Activated CD8-positive, alpha-beta T cell treated with anti-CD3 and anti-CD28 coated beads, Interleukin-2, amount 10 ng/mL, durations not matched to agents 7 days and 5 days (primary cell): ENCODE measurements at regions of chr7 and their contacts with region 1.

Region 1: DNA sequence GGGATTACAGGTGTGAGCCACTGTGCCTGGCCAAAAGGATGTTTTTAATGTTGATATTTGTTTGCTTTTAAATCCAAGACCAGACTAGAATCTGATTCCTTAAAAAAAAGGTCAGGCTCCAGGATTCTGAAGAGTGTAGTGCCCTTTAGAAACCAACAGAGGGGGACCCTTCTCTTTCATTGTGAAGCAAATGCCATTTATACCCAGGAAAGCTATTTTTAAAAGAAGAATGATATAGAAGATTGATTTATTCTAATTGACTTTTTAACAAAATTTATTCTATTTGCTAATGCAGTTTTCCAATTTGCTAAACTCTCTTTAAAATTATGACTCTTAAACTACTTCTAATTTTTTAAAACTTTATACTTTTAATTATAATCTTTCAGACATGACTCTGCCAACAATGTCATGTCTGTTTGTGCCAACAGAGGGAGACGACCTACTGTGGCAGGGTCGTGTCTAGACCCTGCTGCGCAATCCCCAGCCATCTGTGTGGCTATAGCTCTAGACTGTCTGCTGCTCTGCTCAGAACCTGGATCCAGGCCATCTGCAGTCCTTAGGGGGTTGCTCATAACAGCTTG is 201.0 kb upstream of the IMMP2L start:
- DNase-seq: no peak
- ATAC-seq: no peak
- H3K4me3 Mint-ChIP-seq: no peak overlapping the region
- H3K27ac Mint-ChIP-seq: no peak overlapping the region
- H3K4me1 Mint-ChIP-seq: no peaks in the 10 kb centered on the region
- H3K27me3 Mint-ChIP-seq: no peaks in the 10 kb centered on the region

Region 2: DNA sequence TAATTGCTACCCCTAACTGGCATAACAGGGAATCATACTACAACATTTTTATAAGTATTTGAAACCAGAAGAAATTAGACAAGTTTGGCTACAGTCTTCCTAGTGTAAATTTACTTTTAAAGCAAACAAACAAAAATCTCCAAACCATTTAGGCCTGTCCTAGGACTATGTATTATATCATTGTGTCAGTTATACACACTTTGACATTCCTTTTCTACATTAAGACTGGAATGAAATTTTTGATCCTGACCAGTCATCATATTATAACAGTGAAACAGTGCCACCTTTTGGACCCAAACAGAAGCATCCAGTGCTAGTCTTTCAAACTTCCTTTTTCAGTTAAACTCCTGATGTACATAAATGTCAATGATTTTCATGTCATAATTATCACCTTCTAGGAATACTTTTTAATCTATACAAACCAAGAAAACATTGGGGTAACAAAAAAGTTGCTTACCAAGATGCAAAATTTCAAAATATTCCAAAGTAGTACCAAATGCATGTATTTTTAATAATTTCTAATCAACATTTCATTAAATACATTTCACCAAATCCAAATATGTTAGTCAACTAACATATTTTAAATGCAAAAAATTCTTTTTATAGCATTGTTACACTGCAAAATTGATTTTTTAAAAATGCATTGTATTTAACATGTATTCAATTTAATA is 276.7 kb before region 1 on chr7:
- CTCF ChIA-PET with region 1: no interaction called
- POLR2A ChIA-PET with region 1: no interaction called
- DNase-seq: no peak
- ATAC-seq: no peak
- H3K4me3 Mint-ChIP-seq: no peak overlapping the region
- H3K27ac Mint-ChIP-seq: no peak overlapping the region
- H3K4me1 Mint-ChIP-seq: no peaks in the 10 kb centered on the region
- H3K27me3 Mint-ChIP-seq: no peaks in the 10 kb centered on the region

Region 3: GRCh38 chr7:111752022-111752582 is 11.2 kb before region 1 on chr7:
- CTCF ChIA-PET with region 1: interaction called, 12 read pairs
- POLR2A ChIA-PET with region 1: no interaction called
- DNase-seq: peak; percentile 74
- ATAC-seq: peak; percentile 57
- H3K4me3 Mint-ChIP-seq: no peak overlapping the region
- H3K27ac Mint-ChIP-seq: no peak overlapping the region
- H3K4me1 Mint-ChIP-seq: no peaks in the 10 kb centered on the region
- H3K27me3 Mint-ChIP-seq: peaks cover 3% of the 10 kb centered on the region